T-cell (primary cell): ENCODE measurements at regions of chr1 and their contacts with region 1.

Region 1: DNA sequence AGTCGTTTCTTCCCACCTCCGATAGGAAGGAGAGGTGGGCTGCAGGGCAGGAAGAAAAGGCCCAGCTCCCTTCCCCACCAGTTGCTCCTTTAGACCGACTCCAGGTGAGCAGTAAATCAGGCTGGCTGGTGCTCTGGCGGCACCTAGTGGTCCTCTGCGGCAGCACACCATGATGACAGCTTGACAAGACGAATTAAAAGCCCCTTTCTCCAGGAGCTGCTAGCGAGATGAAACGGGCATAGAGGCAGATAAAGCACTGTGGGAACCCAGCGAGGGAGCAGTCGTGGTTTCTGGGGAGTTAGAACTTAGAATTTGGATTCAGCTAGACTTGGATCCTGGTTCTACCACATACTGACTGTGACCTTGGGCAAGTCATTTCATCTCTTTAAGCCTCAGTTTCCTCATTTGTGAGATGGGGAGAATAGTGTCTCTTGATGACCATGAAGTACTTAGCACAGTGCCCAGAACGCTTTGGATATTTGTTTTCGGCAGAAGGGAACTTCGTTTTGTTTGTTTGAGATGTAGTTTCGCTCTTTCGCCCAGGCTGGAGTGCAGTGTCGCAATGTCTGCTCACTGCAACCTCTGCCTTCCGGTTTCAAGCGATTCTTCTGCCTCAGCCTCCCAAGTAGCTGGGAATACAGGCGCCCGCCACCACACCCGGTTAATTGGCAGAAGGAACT is 21.8 kb upstream of the COL9A2 start:
- DNase-seq: peak; percentile 78 to 95 (median 87)
- ATAC-seq: peak; percentile 85 to 93 (median 91)
- H3K4me3 ChIP-seq: no peak overlapping the region
- H3K4me3 Mint-ChIP-seq: peak overlapping the region in 2 of 3 donors; percentile 4 to 25
- H3K27ac ChIP-seq: no peak overlapping the region
- H3K27ac Mint-ChIP-seq: peak overlapping the region in 1 of 2 donors; percentile 5
- H3K4me1 ChIP-seq: peaks cover 0 to 22% of the 10 kb centered on the region in 2 experiments
- H3K4me1 Mint-ChIP-seq: peaks cover 39 to 51% (median 41%) of the 10 kb centered on the region in 3 donors
- H3K27me3 ChIP-seq: no peaks in the 10 kb centered on the region
- H3K27me3 Mint-ChIP-seq: no peaks in the 10 kb centered on the region

Region 2: GRCh38 chr1:40143891-40144575 is 194.9 kb before region 1 on chr1:
- CTCF ChIA-PET with region 1: interaction called, 6 to 21 read pairs
- POLR2A ChIA-PET with region 1: no interaction called
- DNase-seq: peak in 34 of 35 experiments; percentile 5 to 83 (median 34)
- ATAC-seq: peak; percentile 69 to 90 (median 78)
- H3K4me3 ChIP-seq: no peak overlapping the region
- H3K4me3 Mint-ChIP-seq: no peak overlapping the region
- H3K27ac ChIP-seq: no peak overlapping the region
- H3K27ac Mint-ChIP-seq: no peak overlapping the region
- H3K4me1 ChIP-seq: peaks cover 0 to 4% of the 10 kb centered on the region in 2 experiments
- H3K4me1 Mint-ChIP-seq: peaks cover 6 to 8% (median 7%) of the 10 kb centered on the region in 3 donors
- H3K27me3 ChIP-seq: peaks cover 3% of the 10 kb centered on the region in 2 experiments
- H3K27me3 Mint-ChIP-seq: peaks cover 25 to 33% of the 10 kb centered on the region in 2 donors

Region 3: DNA sequence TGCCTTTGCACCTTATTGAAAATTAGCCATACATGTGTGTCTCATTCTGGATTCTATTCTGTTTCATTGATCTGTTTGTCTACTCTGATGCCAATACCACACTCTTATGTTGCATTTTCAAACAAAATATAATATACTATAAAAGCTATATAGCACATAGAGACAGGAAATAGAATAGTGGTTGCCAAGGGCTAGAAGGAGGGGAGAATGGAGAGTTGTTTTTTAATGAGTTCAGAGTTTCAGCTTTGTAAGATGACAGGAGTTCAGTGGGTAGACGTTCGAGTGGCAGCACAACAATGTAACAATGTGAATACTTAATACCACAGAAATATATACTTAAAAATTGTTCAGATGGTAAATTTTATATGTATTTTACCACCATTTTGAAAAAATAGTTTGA is 160.7 kb before region 1 on chr1:
- CTCF ChIA-PET with region 1: interaction called, 3 read pairs
- POLR2A ChIA-PET with region 1: interaction called in 1 of 2 experiments, 18 read pairs
- DNase-seq: no peak
- ATAC-seq: peak in 1 of 4 experiments; percentile 59
- H3K4me3 ChIP-seq: no peak overlapping the region
- H3K4me3 Mint-ChIP-seq: peak overlapping the region in 1 of 3 donors; percentile 2
- H3K27ac ChIP-seq: no peak overlapping the region
- H3K27ac Mint-ChIP-seq: peak overlapping the region in 1 of 2 donors; percentile 13
- H3K4me1 ChIP-seq: peaks cover 13 to 30% of the 10 kb centered on the region in 2 experiments
- H3K4me1 Mint-ChIP-seq: peaks cover 63 to 80% (median 77%) of the 10 kb centered on the region in 3 donors
- H3K27me3 ChIP-seq: no peaks in the 10 kb centered on the region
- H3K27me3 Mint-ChIP-seq: no peaks in the 10 kb centered on the region

Region 4: GRCh38 chr1:40315239-40315794 is 23.6 kb before region 1 on chr1:
- CTCF ChIA-PET with region 1: interaction called, 4 to 20 read pairs
- POLR2A ChIA-PET with region 1: interaction called in 1 of 2 experiments, 4 read pairs
- DNase-seq: peak; percentile 71 to 93 (median 83)
- ATAC-seq: peak; percentile 66 to 83 (median 74)
- H3K4me3 ChIP-seq: peak overlapping the region; percentile 52 to 85
- H3K4me3 Mint-ChIP-seq: peak overlapping the region; percentile 81 to 90 (median 83)
- H3K27ac ChIP-seq: no peak overlapping the region
- H3K27ac Mint-ChIP-seq: peak overlapping the region in 1 of 2 donors; percentile 39
- H3K4me1 ChIP-seq: peaks cover 13 to 46% of the 10 kb centered on the region in 2 experiments
- H3K4me1 Mint-ChIP-seq: peaks cover 33 to 54% (median 40%) of the 10 kb centered on the region in 3 donors
- H3K27me3 ChIP-seq: peaks cover 2 to 33% of the 10 kb centered on the region in 2 experiments
- H3K27me3 Mint-ChIP-seq: peaks cover 9 to 10% of the 10 kb centered on the region in 2 donors

Region 5: GRCh38 chr1:40363721-40364120 is 24.8 kb after region 1 on chr1:
- CTCF ChIA-PET with region 1: interaction called in 1 of 2 experiments, 12 read pairs
- POLR2A ChIA-PET with region 1: no interaction called
- DNase-seq: no peak
- ATAC-seq: no peak
- H3K4me3 ChIP-seq: no peak overlapping the region
- H3K4me3 Mint-ChIP-seq: no peak overlapping the region
- H3K27ac ChIP-seq: no peak overlapping the region
- H3K27ac Mint-ChIP-seq: no peak overlapping the region
- H3K4me1 ChIP-seq: no peaks in the 10 kb centered on the region
- H3K4me1 Mint-ChIP-seq: peaks cover 0 to 6% (median 4%) of the 10 kb centered on the region in 3 donors
- H3K27me3 ChIP-seq: peaks cover 0 to 11% of the 10 kb centered on the region in 2 experiments
- H3K27me3 Mint-ChIP-seq: no peaks in the 10 kb centered on the region

Region 6: DNA sequence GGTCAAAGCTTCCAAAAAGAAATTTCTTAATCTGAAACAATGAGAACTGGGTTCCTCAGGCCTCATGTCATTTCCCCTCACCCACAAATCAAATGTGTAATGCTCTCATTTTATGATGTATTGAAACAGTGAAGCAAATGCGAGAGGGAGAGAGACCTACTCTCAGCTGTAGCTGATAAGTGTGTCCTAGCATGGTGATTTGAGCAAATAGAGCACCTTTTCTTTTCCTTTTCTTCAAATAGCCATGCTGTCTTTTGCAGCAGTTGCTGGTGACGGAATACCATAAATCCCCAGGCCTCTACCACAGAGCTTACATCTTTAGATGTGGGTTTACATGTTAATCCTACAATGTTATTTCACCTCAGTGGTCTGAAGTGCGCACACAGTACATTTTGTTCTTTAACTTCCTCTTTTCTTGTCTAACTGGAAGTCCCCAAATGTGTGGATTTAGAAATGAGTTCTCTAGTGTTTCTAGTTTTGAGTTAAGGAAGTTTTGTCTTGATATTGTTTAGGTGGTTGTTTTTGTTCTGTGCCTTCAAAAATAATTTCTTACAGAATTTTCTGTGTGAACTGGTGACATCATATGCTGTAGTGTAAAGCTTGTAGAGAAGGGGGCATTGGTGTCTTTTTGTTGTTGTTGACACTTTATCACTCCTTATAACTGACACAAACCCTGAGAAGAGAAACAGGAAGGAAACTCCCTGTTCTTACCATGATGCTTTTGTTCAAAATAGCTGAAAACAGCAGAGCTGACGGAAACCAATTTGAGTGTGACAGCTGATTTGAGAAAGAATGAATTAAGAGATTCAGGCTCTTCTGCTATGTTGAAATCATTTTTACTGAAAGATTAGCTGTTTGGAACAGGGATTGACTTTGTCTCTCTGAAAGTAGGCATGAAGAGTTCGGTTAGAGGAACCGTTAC is 46.8 kb after region 1 on chr1:
- CTCF ChIA-PET with region 1: interaction called, 6 to 17 read pairs
- POLR2A ChIA-PET with region 1: interaction called, 4 to 5 read pairs
- DNase-seq: peak in 33 of 35 experiments; percentile 31 to 93 (median 70)
- ATAC-seq: peak; percentile 75 to 81 (median 76)
- H3K4me3 ChIP-seq: peak overlapping the region; percentile 30 to 62
- H3K4me3 Mint-ChIP-seq: peak overlapping the region; percentile 79 to 89 (median 86)
- H3K27ac ChIP-seq: peak overlapping the region; percentile 96
- H3K27ac Mint-ChIP-seq: peak overlapping the region; percentile 99 to 100
- H3K4me1 ChIP-seq: peaks cover 84% of the 10 kb centered on the region in 2 experiments
- H3K4me1 Mint-ChIP-seq: peaks cover 88 to 96% (median 95%) of the 10 kb centered on the region in 3 donors
- H3K27me3 ChIP-seq: no peaks in the 10 kb centered on the region
- H3K27me3 Mint-ChIP-seq: no peaks in the 10 kb centered on the region

Region 7: GRCh38 chr1:40531381-40532061 is 192.6 kb after region 1 on chr1 and contains the start of gene ZNF684:
- CTCF ChIA-PET with region 1: no interaction called
- POLR2A ChIA-PET with region 1: no interaction called
- DNase-seq: peak; percentile 60 to 93 (median 79)
- ATAC-seq: peak; percentile 97 to 99 (median 98)
- H3K4me3 ChIP-seq: peak within 1 kb of the TSS; percentile 55 to 59
- H3K4me3 Mint-ChIP-seq: peak within 1 kb of the TSS; percentile 87 to 99 (median 99)
- H3K27ac ChIP-seq: peak within 1 kb of the TSS; percentile 77
- H3K27ac Mint-ChIP-seq: peak within 1 kb of the TSS; percentile 89 to 95
- H3K4me1 ChIP-seq: peaks cover 7 to 13% of the 10 kb centered on the region in 2 experiments
- H3K4me1 Mint-ChIP-seq: peaks cover 24 to 28% (median 25%) of the 10 kb centered on the region in 3 donors
- H3K27me3 ChIP-seq: no peaks in the 10 kb centered on the region
- H3K27me3 Mint-ChIP-seq: peaks cover 0 to 14% of the 10 kb centered on the region in 2 donors
- total RNA-seq, gene ZNF684: 2.4 to 6.0 (median 4.5) TPM